Breast epithelium (tissue), 4 donors: ENCODE measurements at regions of chr22 and their contacts with region 1.

Region 1: DNA sequence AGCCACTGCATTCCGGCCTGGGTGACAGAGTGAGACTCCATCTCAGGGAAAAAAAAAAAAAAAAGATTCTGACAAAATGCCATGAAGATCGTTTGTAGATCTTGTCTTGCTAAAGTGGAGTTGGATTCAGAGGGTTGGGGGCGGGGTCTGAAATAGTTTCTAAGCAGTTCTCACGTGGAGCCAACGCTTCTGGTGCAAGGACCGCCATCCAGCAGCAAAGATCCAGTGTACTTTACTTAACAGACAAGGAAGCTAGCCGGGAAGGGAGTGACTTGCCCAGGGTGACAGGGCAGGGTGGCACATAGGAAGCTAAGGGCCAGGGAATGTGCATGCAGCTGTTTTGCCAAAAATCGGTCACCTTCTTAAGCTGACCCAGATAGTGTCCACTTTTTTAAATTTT is 27.4 kb downstream of the APOL1 start:
- DNase-seq: no peak
- H3K4me3 ChIP-seq: no peak overlapping the region
- H3K27ac ChIP-seq: no peak overlapping the region
- H3K4me1 ChIP-seq: no peaks in the 10 kb centered on the region
- H3K27me3 ChIP-seq: no peaks in the 10 kb centered on the region
- CTCF ChIP-seq: no peak
- POLR2A ChIP-seq: no peak

Region 2: GRCh38 chr22:36194971-36195370 is 85.4 kb before region 1 on chr22:
- intact Hi-C with region 1: loop called (anchors 5 kb)
- DNase-seq: peak in 1 of 2 donors; percentile 49
- H3K4me3 ChIP-seq: no peak overlapping the region
- H3K27ac ChIP-seq: no peak overlapping the region
- H3K4me1 ChIP-seq: no peaks in the 10 kb centered on the region
- H3K27me3 ChIP-seq: no peaks in the 10 kb centered on the region
- CTCF ChIP-seq: peak; percentile 51 to 56 (median 53)
- POLR2A ChIP-seq: no peak

Region 3: DNA sequence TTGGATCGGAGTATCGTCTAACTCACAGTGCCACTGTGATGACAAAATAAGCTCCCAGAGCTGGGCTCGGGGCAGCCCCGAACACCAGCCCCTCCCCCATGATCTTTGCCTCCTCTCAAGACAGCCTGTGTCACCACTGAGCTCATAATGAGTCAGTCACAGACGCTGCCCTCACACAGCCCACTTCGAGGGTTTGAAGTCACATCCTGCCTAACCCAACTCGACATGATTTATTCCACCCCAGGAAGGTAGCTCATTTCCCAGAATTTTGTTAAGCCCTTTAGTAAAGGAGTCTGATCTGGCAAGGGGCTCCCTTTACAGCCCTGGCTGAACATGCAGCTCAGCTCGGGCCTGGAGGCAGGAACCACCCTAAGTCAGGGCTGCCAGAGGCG is 84.6 kb after region 1 on chr22:
- intact Hi-C with region 1: no loop called
- DNase-seq: no peak
- H3K4me3 ChIP-seq: peak overlapping the region in 1 of 3 donors; percentile 0
- H3K27ac ChIP-seq: peak overlapping the region; percentile 92
- H3K4me1 ChIP-seq: peaks cover 52 to 88% of the 10 kb centered on the region in 2 donors
- H3K27me3 ChIP-seq: no peaks in the 10 kb centered on the region
- CTCF ChIP-seq: no peak
- POLR2A ChIP-seq: no peak